ENCODE measurements at regions of chr4 and their contacts with region 1.

Region 1: DNA sequence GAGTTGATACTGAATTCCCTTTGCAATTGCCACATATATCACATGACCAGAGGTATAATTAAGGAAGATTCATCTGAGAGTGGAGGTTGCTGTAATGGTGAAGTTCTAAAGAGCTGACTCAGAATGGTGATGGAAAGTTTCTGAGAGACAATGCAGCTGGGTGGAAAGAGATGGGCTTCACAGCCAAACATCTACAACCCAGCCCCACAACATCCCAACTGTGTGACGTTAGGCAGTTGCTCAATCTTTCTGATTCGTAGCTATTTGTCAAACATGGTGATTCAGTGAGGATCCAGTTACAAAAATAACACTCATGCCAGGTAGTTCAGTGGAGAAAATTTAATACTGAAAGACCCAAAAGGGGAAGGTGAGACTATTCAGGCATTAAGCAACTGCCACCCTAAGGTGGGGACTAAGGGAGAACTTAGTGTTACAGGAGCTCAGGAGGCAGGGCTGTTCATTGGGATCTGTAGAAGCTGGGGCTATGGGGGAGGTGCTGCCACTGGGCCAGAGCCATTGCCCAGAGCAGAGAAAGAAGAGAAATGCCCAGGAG is 6.9 kb upstream of the AFF1 start:
- DNase-seq: peak; percentile 82 to 91 (median 87)
- H3K4me3 ChIP-seq: no peak overlapping the region
- H3K4me3 Mint-ChIP-seq: no peak overlapping the region
- H3K27ac ChIP-seq: peak overlapping the region; percentile 9 to 68
- H3K27ac Mint-ChIP-seq: peak overlapping the region; percentile 81 to 95 (median 89)
- H3K4me1 ChIP-seq: peaks cover 25% of the 10 kb centered on the region in 2 donors
- H3K4me1 Mint-ChIP-seq: peaks cover 44% of the 10 kb centered on the region
- H3K27me3 ChIP-seq: no peaks in the 10 kb centered on the region
- H3K27me3 Mint-ChIP-seq: no peaks in the 10 kb centered on the region
- CTCF ChIP-seq: no peak

Region 2: DNA sequence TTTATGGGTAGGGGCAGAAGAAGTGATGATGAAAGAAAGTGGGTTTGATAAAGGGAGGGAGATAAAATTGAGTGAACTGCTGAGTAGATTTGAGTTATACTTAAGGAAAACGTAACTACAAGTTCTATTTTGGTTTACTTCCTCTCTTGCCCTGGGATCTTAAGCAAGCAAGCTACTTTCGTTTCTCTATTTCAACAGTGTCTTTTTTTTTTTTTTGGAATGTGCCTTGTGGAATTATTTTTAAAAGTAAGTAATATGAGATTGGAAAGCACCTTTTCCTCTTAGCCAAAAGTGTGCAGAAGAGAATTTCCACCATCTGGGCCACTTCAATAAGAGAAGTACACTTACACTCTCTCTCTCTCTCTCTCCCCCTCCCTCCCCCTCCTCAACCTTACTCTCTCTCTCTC is 19.7 kb before region 1 on chr4:
- intact Hi-C with region 1: loop called in 1 of 2 experiments (anchors 2 kb)
- DNase-seq: peak; percentile 71 to 80 (median 73)
- H3K4me3 ChIP-seq: peak overlapping the region in 1 of 3 experiments; percentile 59
- H3K4me3 Mint-ChIP-seq: peak overlapping the region; percentile 54 to 62
- H3K27ac ChIP-seq: peak overlapping the region; percentile 83 to 86
- H3K27ac Mint-ChIP-seq: peak overlapping the region; percentile 90 to 97 (median 94)
- H3K4me1 ChIP-seq: peaks cover 64 to 69% of the 10 kb centered on the region in 2 donors
- H3K4me1 Mint-ChIP-seq: peaks cover 56% of the 10 kb centered on the region
- H3K27me3 ChIP-seq: no peaks in the 10 kb centered on the region
- H3K27me3 Mint-ChIP-seq: no peaks in the 10 kb centered on the region
- CTCF ChIP-seq: no peak

Region 3: DNA sequence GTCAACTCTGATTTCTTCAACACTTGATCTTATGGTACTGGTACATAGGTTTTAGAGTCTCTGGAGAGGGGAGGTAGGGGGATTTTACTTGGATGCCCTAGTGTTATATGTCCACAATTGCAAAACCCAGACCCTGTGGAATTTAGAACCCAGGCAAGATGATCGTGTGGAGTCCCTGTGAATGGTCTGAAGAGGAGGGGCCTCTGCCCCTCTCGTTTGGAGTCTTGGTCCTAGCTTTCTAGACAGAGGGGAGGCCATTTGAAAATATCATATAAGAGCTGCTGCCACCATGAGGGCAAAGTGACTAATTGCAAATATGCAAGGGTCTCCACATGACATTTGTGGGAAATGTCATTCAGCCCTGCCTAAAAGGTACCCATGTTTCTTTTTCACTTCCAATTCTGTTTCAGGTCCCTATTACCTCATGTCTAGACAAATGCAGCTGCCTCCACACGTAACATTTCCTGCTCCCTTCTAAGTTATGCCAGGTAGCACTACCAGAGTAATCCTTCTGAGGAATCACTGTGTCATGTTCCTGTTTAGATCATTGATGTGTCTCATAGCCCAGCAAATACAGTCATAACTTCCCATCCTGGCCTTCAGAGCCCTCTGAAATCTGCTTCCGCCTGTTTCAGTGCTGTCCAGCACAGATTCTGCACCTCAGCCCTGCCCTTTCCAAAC is 165.7 kb after region 1 on chr4:
- intact Hi-C with region 1: loop called in 1 of 2 experiments (anchors 5 kb)
- DNase-seq: peak; percentile 18 to 45 (median 44)
- H3K4me3 ChIP-seq: no peak overlapping the region
- H3K4me3 Mint-ChIP-seq: no peak overlapping the region
- H3K27ac ChIP-seq: peak overlapping the region in 1 of 2 donors; percentile 42
- H3K27ac Mint-ChIP-seq: peak overlapping the region; percentile 20 to 84 (median 77)
- H3K4me1 ChIP-seq: peaks cover 7 to 19% of the 10 kb centered on the region in 2 donors
- H3K4me1 Mint-ChIP-seq: peaks cover 21% of the 10 kb centered on the region
- H3K27me3 ChIP-seq: no peaks in the 10 kb centered on the region
- H3K27me3 Mint-ChIP-seq: no peaks in the 10 kb centered on the region
- CTCF ChIP-seq: peak; percentile 80

Region 4: DNA sequence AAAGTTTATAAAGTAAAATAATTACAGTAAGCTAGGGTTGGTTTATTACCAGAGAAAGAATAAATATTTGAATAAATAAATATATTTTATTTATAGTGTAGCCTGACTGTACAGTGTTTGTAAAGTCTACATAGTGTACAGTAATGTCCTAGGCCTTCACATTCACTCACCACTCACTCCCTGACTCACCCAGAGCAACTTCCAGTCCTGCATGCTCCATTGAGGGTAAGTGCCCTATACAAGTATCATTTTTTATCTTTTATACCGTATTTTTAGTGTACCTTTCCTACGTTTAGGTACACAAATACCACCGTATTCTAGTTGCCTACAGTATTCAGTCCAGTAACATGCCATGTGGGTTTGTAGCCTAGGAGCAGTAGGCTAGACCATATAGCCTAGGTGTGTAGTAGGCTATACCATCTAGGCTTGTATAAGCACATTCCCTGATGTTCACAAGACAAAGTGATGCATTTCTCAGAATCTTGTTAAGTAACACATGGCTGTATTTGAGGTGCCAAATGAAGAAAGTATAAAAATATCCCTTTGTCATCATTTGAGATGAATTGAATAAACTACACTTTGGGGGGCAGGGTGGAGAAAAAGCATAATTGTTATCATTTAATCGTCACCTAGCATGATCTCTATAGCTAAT is 307.2 kb after region 1 on chr4:
- intact Hi-C with region 1: loop called in 1 of 2 experiments (anchors 10 kb)
- DNase-seq: no peak
- H3K4me3 ChIP-seq: peak overlapping the region; percentile 42 to 74 (median 70)
- H3K4me3 Mint-ChIP-seq: peak overlapping the region; percentile 81 to 92
- H3K27ac ChIP-seq: no peak overlapping the region
- H3K27ac Mint-ChIP-seq: no peak overlapping the region
- H3K4me1 ChIP-seq: no peaks in the 10 kb centered on the region
- H3K4me1 Mint-ChIP-seq: peaks cover 8% of the 10 kb centered on the region
- H3K27me3 ChIP-seq: no peaks in the 10 kb centered on the region
- H3K27me3 Mint-ChIP-seq: peaks cover 0 to 5% (median 3%) of the 10 kb centered on the region in 3 donors
- CTCF ChIP-seq: no peak

Measured in CD14-positive monocyte (primary cell).